ENCODE measurements at regions of chr3 and their contacts with region 1.

Region 1: GRCh38 chr3:61858056-61858455 is 296.7 kb downstream of the PTPRG start:
- DNase-seq: no peak
- ATAC-seq: peak; percentile 47
- H3K4me3 ChIP-seq: no peak overlapping the region
- H3K4me1 ChIP-seq: no peaks in the 10 kb centered on the region
- CTCF ChIP-seq: no peak

Region 2: GRCh38 chr3:61912158-61912557 is 54.1 kb after region 1 on chr3:
- intact Hi-C with region 1: no loop called
- DNase-seq: no peak
- ATAC-seq: no peak
- H3K4me3 ChIP-seq: no peak overlapping the region
- H3K4me1 ChIP-seq: no peaks in the 10 kb centered on the region
- CTCF ChIP-seq: no peak

Region 3: DNA sequence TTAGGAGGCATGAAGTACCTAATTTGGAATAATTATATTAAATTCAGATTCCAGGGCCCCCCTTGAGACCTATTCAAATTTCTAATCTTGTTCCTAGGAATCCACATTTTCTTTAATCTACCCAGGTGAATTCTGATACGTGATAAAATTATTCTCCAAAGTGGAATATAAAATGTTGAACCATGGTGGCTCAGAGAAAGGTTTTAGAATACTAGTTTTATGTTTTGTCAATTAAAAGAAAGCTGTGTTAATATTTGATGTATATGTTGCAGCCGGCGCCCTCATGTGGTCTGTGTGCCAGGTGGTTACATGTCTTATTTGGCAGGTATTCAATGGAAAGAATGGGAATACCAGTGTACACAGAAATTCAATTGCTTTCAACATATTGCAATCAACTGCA is 193.5 kb after region 1 on chr3:
- intact Hi-C with region 1: loop called in 1 of 2 experiments (anchors 10 kb)
- DNase-seq: peak in 2 of 3 donors; percentile 63 to 82
- ATAC-seq: peak; percentile 63
- H3K4me3 ChIP-seq: no peak overlapping the region
- H3K4me1 ChIP-seq: no peaks in the 10 kb centered on the region
- CTCF ChIP-seq: no peak

Region 4: DNA sequence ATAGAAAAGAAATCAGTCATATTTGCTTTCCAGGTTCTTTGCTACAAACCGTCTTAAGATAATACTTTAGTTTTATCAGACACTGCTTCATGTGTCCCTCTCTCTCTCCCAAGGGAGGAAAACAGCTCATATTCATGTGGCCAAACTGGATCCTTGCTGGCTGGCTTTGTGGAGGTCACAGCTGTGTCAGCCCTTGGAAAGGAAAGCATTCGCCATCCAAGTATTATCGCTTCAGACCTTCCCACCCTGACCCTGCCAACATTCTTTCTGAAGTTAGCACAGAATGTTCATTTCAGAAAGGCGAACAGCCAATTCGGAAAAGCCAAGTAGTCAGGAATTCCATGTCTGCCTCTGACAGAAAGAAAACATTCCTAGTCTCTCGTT is 301.6 kb after region 1 on chr3:
- intact Hi-C with region 1: no loop called
- DNase-seq: peak in 1 of 3 donors; percentile 17
- ATAC-seq: peak; percentile 50
- H3K4me3 ChIP-seq: no peak overlapping the region
- H3K4me1 ChIP-seq: no peaks in the 10 kb centered on the region
- CTCF ChIP-seq: no peak

Region 5: DNA sequence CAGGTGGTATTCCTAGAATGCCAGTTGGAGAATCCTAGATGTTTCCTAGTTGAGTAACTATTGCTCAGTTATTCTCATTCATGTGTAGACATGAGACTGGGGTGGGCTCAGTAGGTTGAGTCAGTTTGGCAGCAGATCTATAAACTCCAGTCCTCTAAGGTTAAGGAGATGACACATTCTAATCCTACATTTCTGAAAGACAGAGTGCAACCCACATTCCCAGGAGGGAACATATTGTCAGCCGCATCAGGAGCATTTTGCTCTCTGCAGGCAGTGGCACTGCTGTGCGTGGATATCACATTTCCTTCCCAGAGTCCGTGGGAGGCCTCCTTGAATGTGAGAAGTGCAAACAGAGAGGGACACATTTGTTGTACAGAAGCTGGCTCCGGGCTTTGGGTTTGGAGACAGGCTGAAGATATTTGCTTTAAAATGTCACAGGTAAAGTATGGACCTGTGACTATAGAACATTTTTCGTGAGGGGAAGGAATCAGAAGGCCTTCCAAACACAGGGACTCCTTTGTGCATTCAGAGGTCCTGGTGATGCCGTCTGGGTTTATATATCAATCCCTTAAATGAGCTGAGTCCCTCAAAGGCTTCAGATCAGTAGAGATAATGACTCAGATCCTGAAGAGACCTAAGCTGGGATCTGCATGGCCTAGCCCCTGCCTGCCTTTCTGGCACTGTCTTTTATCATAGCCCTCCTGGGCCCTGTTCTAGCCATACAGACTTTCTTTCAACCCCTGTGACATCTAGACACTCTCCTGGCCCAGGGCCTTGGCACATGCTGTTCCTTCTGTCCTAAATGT is 860.7 kb after region 1 on chr3:
- intact Hi-C with region 1: no loop called
- DNase-seq: no peak
- ATAC-seq: no peak
- H3K4me3 ChIP-seq: no peak overlapping the region
- H3K4me1 ChIP-seq: no peaks in the 10 kb centered on the region
- CTCF ChIP-seq: no peak